Left cardiac atrium (tissue), 4 donors: ENCODE measurements at regions of chr10 and their contacts with region 1.

Region 1: GRCh38 chr10:120042705-120043104 is 150.2 kb downstream of the SEC23IP start:
- DNase-seq: no peak
- ATAC-seq: no peak

Region 2: GRCh38 chr10:119908166-119908565 is 134.5 kb before region 1 on chr10:
- intact Hi-C with region 1: no loop called
- DNase-seq: no peak
- ATAC-seq: no peak

Region 3: DNA sequence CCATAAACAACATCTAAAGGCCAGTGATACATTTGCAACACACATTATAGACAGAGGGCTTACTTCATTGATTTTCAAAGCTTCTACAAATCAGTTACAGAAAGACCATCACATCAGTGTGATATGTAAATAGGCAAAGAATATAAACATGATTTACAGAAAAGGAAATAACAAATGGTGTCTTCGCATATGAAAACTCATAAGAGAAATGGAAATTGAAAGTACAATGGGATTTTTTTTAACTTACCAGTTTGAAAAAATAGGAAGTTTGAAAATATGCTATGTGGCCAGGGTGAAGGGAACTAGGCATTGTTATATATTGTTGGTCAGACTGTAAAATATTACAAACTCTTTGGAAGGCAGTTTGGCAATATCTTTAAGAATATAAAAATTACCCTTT is 122.9 kb before region 1 on chr10:
- intact Hi-C with region 1: no loop called
- DNase-seq: no peak
- ATAC-seq: no peak

Region 4: GRCh38 chr10:120017733-120018417 is 24.8 kb before region 1 on chr10:
- intact Hi-C with region 1: loop called in 1 of 2 experiments (anchors 1 kb)
- DNase-seq: no peak
- ATAC-seq: no peak